ENCODE measurements at regions of chr1 and their contacts with region 1.

Region 1: GRCh38 chr1:46616277-46617107 is at the start of gene MOB3C:
- DNase-seq: peak; percentile 46 to 86
- H3K4me3 ChIP-seq: peak within 1 kb of the TSS; percentile 66
- H3K27ac ChIP-seq: peak within 1 kb of the TSS; percentile 53
- H3K4me1 ChIP-seq: peaks cover 54% of the 10 kb centered on the region
- H3K27me3 ChIP-seq: no peaks in the 10 kb centered on the region
- CTCF ChIP-seq: no peak
- total RNA-seq, gene MOB3C: 33.9 and 35.2 TPM in 2 replicates

Region 2: DNA sequence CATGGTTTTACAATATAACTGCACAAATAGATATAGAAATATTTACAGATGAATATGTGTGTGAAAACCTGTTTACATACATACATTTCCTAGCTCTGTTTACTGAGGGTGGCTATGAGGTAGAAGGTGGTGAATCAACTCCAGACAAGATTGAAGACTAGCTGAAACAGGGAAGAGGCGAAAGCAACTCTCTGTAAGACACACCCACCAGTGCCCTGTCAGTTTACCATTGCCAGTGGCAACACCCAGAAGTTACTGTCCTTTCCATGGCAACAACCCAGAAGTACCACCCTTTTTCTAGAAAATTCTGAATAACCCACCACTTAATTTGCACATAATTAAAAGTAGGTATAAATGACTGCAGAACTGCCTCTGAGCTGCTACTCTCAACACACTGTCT is 911.9 kb before region 1 on chr1:
- CTCF ChIA-PET with region 1: no interaction called
- POLR2A ChIA-PET with region 1: no interaction called
- intact Hi-C with region 1: no loop called
- DNase-seq: no peak
- H3K4me3 ChIP-seq: no peak overlapping the region
- H3K27ac ChIP-seq: no peak overlapping the region
- H3K4me1 ChIP-seq: no peaks in the 10 kb centered on the region
- H3K27me3 ChIP-seq: no peaks in the 10 kb centered on the region
- CTCF ChIP-seq: no peak

Region 3: DNA sequence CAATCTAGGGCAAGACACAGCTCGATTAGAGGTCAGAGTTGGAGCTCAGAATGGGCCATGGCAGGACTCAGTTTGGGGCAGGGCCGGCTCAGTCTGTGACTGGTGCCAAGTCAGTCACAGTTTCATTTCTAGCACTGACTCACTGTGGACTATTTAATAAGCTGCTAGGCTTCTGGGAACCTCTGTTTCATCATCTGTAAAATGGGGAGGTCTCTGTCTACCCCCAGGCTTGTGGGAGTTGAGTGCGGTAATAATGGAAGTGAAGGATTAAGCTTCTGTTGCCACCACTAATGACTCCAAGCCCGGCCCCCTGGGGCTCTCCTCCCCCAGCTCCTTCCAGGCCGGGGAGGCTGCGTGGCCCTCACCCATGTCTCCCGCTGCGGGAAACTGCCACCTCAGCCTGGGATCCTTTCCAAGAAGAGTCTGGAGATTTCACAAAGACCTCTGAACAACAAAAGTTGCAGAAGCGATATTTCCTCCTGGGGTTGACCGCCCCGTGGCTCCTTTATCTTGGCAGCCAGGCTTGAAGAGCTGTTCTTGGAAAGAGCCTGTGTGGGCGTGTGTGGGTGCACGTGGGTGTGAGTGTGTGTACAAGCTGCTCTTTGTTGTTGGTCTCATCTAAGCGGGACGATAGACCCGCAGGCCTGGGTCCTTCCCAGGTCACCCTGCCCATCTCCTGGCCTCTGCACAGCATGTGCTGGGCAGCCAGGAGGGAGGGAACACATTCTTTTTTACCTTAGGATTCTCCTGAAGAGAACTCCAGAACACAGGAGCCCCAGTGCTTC is 94.1 kb before region 1 on chr1:
- CTCF ChIA-PET with region 1: no interaction called
- POLR2A ChIA-PET with region 1: no interaction called
- intact Hi-C with region 1: loop called (anchors 2 kb)
- DNase-seq: peak; percentile 81 to 85
- H3K4me3 ChIP-seq: no peak overlapping the region; the same call in 1 of the 2 replicates
- H3K27ac ChIP-seq: peak overlapping the region; percentile 65
- H3K4me1 ChIP-seq: peaks cover 65% of the 10 kb centered on the region
- H3K27me3 ChIP-seq: no peaks in the 10 kb centered on the region
- CTCF ChIP-seq: no peak

Region 4: DNA sequence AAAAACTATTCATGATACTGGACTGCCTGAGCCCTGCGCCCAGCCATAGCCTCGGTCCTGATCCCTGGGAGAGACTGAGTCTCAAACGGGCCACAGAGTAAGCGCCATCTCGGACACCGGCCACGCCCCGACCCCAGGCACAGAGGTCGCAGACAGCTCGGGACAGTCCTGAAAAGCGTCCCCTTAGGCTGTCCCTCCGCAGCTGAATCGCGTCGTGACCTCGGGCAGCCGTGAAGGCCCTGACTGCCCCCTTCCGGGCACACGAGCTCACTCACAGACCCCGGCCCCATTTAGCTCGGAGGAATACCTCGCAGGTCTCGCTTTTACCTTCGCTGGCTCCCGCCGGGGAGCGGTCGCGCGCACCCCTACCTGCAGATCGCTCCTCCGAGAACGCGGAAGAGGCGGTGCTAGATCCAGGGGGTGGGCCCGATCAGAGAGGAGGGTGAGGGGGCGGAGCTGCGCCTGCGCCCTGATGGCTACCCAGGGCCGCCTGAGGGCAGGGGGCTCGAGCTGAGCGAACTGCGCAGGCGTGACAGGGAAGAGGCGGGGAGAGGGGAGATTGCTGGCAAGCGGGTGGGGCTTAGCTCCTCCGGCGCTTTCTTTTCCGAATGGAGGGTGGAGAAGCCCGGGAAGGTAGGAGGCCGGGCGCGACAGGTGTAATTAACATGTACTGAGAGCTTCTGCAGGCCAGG is 12.5 kb before region 1 on chr1 and contains the start of gene MKNK1:
- CTCF ChIA-PET with region 1: interaction called, 3 read pairs
- POLR2A ChIA-PET with region 1: interaction called, 28 read pairs
- intact Hi-C with region 1: loop called (anchors 1 kb)
- DNase-seq: peak; percentile 85 to 100
- H3K4me3 ChIP-seq: peak within 1 kb of the TSS; percentile 95
- H3K27ac ChIP-seq: peak within 1 kb of the TSS; percentile 37
- H3K4me1 ChIP-seq: peaks cover 29% of the 10 kb centered on the region
- H3K27me3 ChIP-seq: no peaks in the 10 kb centered on the region
- CTCF ChIP-seq: no peak
- total RNA-seq, gene MKNK1: 103 and 112 TPM in 2 replicates

Region 5: GRCh38 chr1:46718727-46719622 is 102.5 kb after region 1 on chr1 and contains the start of gene EFCAB14:
- CTCF ChIA-PET with region 1: no interaction called
- POLR2A ChIA-PET with region 1: interaction called, 6 read pairs
- intact Hi-C with region 1: loop called (anchors 2 kb)
- DNase-seq: peak; percentile 91 to 100
- H3K4me3 ChIP-seq: peak within 1 kb of the TSS; percentile 82
- H3K27ac ChIP-seq: peak within 1 kb of the TSS; percentile 88
- H3K4me1 ChIP-seq: peaks cover 53% of the 10 kb centered on the region
- H3K27me3 ChIP-seq: no peaks in the 10 kb centered on the region
- CTCF ChIP-seq: no peak
- total RNA-seq, gene EFCAB14: 71.1 and 95.4 TPM in 2 replicates

Region 6: DNA sequence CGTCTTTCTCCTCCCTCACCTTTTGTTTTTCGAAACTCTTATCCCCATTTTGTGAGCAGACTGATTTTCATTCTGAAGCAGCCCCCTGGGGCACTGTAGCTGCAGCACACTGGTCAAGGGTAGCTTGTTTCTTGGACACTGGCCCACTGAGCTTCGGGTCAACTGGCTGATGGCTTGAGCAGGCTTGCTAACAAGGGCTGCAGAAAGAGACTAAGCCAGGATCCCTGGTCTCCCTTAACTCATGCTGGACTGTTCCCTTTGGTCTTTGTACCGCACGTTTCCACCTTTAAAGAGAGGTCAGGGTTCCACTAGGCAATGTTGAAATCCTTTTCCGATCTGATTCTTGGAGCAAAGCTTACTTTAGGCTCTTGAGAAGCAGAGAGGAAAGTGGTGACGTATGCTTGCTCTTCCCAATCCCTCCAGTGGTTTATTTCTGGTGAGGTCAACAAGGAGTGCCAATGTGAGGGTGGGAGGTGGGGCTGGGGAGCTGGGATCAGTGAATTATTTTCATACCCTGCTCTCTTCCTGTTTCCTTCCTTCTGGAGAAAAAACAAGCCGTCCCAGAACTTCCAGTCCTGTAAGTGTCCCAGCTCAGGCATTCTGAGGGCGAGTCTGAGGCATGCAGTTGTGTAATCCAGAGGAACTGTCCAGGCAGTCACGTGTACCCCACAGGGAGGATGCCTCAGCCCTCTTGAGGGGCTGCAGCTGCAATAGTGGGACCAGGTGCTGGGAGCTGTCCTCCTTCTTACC is 190.0 kb after region 1 on chr1:
- CTCF ChIA-PET with region 1: interaction called, 4 read pairs
- POLR2A ChIA-PET with region 1: no interaction called
- intact Hi-C with region 1: loop called (anchors 5 kb)
- DNase-seq: peak; percentile 69 to 82
- H3K4me3 ChIP-seq: no peak overlapping the region
- H3K27ac ChIP-seq: peak overlapping the region; percentile 73
- H3K4me1 ChIP-seq: peaks cover 51% of the 10 kb centered on the region
- H3K27me3 ChIP-seq: no peaks in the 10 kb centered on the region
- CTCF ChIP-seq: no peak

Measured in PC-9 (cell line).